PC-3 (cell line): ENCODE measurements at regions of chr9 and their contacts with region 1.

Region 1: GRCh38 chr9:116860509-116861120 is 173.5 kb downstream of the TRIM32 start:
- DNase-seq: peak; percentile 54
- ATAC-seq: 0 out of 2 replicates have a peak, but pooled peaks have one; percentile 18
- H3K4me3 ChIP-seq: no peak overlapping the region
- H3K27ac ChIP-seq: no peak overlapping the region
- H3K4me1 ChIP-seq: peaks cover 8% of the 10 kb centered on the region; the same call in 1 of the 2 replicates
- H3K27me3 ChIP-seq: no peaks in the 10 kb centered on the region
- CTCF ChIP-seq: peak; percentile 61

Region 2: GRCh38 chr9:116737152-116737546 is 123.5 kb before region 1 on chr9:
- CTCF ChIA-PET with region 1: interaction called, 6 read pairs
- POLR2A ChIA-PET with region 1: no interaction called
- intact Hi-C with region 1: loop called (anchors 2 kb)
- DNase-seq: peak; percentile 78
- ATAC-seq: peak; percentile 82
- H3K4me3 ChIP-seq: no peak overlapping the region
- H3K27ac ChIP-seq: no peak overlapping the region
- H3K4me1 ChIP-seq: no peaks in the 10 kb centered on the region
- H3K27me3 ChIP-seq: no peaks in the 10 kb centered on the region
- CTCF ChIP-seq: peak; percentile 87

Region 3: GRCh38 chr9:116817762-116818161 is 42.9 kb before region 1 on chr9:
- CTCF ChIA-PET with region 1: no interaction called
- POLR2A ChIA-PET with region 1: no interaction called
- intact Hi-C with region 1: no loop called
- DNase-seq: no peak
- ATAC-seq: no peak
- H3K4me3 ChIP-seq: no peak overlapping the region
- H3K27ac ChIP-seq: no peak overlapping the region
- H3K4me1 ChIP-seq: no peaks in the 10 kb centered on the region
- H3K27me3 ChIP-seq: no peaks in the 10 kb centered on the region; the same call in 1 of the 2 replicates
- CTCF ChIP-seq: no peak